ENCODE measurements at regions of chr15 and their contacts with region 1.

Region 1: DNA sequence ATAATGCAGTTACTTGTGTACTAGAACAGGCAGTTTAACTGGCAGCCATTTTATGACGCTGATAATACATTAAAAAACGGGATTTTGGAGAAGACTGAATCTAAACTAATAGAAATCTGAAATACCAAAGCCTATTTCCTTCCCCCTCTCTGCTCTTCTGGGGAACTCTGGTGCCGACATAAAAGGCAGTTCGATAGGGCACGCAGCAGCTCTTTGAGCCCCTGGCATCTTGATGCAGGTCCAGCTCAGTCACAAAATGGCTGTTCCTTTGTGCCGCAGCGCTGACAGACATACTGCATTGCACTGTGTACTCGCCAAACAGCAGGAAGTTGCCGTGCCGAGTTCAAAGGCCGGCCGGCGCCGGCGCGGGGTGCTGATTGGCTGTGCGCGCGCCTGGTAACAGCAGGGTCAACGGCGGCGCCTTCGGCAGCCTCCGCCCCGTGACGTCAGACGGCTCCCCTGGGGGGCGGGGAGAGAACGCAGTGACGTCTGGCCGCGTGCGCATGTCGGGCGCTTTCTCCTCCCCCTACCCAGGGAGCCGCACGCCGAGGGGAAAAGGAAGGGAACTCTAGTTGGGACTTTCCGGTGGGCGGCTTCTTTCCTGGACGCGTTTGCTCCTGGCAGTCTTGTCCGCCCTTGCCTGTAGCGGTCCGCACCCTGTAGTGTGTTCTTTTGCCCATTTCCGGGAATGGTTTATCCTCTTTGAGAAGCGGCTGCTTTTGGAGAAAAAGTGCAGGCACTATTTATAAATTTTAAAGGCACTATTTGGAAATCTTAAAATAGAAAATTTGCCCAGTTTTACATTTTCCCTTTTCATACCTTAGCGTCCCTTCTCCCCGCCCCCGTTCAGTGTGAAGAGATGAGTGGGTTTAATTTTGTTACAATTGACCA is 4.1 kb downstream of the CHD2 start:
- DNase-seq: peak; percentile 98
- H3K4me3 Mint-ChIP-seq: peak overlapping the region; percentile 91
- H3K27ac Mint-ChIP-seq: peak overlapping the region; percentile 99
- H3K4me1 Mint-ChIP-seq: peaks cover 35% of the 10 kb centered on the region
- H3K27me3 Mint-ChIP-seq: no peaks in the 10 kb centered on the region
- CTCF ChIP-seq: no peak

Region 2: DNA sequence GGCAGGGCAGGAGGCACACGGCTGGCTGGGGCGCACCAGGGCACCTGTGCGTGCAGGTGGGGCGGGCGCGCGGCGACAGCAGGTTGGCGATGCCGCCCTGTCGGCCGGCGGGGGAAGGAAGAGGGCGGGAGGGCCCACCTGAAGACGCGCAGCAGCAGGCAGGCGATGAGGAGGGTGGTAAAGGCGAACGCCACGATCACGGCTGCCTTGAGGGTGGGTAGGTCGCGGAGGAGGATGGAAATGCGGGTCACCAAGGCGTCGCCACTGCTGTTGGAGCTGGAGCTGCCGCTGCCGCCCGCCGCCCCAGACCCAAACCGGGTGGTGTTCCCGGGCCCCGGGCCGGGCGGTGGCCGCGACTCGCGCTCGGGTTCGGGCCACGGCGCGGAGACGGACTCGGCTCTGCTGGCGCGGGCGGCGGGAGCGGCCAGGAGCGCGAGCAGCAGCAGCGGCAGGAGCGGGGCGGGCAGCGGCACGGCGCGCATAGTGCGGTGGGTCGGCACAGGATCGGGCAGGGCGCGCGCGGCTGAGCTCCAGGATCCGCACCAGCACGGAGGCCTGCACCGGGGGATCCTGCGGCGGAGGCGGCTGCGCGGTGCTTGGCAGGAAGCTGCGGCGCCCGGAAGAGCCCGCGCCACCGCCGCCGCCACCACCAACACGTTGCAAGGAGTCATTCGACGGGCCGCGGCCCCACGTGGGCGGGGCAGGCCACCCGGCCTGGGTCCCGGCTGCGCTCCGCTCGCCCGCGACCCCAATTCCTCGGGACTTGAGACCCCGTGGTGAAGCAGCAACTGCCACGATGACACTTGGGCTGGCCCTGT is 248.8 kb before region 1 on chr15 and contains the start of gene FAM174B:
- CTCF ChIA-PET with region 1: no interaction called
- POLR2A ChIA-PET with region 1: no interaction called
- intact Hi-C with region 1: no loop called
- DNase-seq: no peak
- H3K4me3 Mint-ChIP-seq: peak within 1 kb of the TSS; percentile 60
- H3K27ac Mint-ChIP-seq: no peak within 1 kb of the TSS
- H3K4me1 Mint-ChIP-seq: peaks cover 4% of the 10 kb centered on the region
- H3K27me3 Mint-ChIP-seq: peaks cover 8% of the 10 kb centered on the region
- CTCF ChIP-seq: no peak
- total RNA-seq, gene FAM174B: 3.5 and 6.5 TPM in 2 replicates

Region 3: GRCh38 chr15:92733934-92734521 is 170.2 kb before region 1 on chr15:
- CTCF ChIA-PET with region 1: no interaction called
- POLR2A ChIA-PET with region 1: no interaction called
- intact Hi-C with region 1: no loop called
- DNase-seq: no peak
- H3K4me3 Mint-ChIP-seq: peak overlapping the region; percentile 68
- H3K27ac Mint-ChIP-seq: no peak overlapping the region
- H3K4me1 Mint-ChIP-seq: no peaks in the 10 kb centered on the region
- H3K27me3 Mint-ChIP-seq: no peaks in the 10 kb centered on the region
- CTCF ChIP-seq: no peak

Region 4: GRCh38 chr15:92797168-92797951 is 106.8 kb before region 1 on chr15:
- CTCF ChIA-PET with region 1: interaction called, 24 read pairs
- POLR2A ChIA-PET with region 1: interaction called, 847 read pairs
- intact Hi-C with region 1: no loop called
- DNase-seq: peak; percentile 76
- H3K4me3 Mint-ChIP-seq: no peak overlapping the region
- H3K27ac Mint-ChIP-seq: peak overlapping the region; percentile 84
- H3K4me1 Mint-ChIP-seq: peaks cover 18% of the 10 kb centered on the region
- H3K27me3 Mint-ChIP-seq: no peaks in the 10 kb centered on the region
- CTCF ChIP-seq: peak; percentile 53

Region 5: GRCh38 chr15:92803847-92804609 is 100.2 kb before region 1 on chr15:
- CTCF ChIA-PET with region 1: interaction called, 24 read pairs
- POLR2A ChIA-PET with region 1: interaction called, 847 read pairs
- intact Hi-C with region 1: loop called (anchors 1 kb)
- DNase-seq: peak; percentile 100
- H3K4me3 Mint-ChIP-seq: peak overlapping the region; percentile 1
- H3K27ac Mint-ChIP-seq: peak overlapping the region; percentile 98
- H3K4me1 Mint-ChIP-seq: peaks cover 34% of the 10 kb centered on the region
- H3K27me3 Mint-ChIP-seq: no peaks in the 10 kb centered on the region
- CTCF ChIP-seq: no peak

Region 6: DNA sequence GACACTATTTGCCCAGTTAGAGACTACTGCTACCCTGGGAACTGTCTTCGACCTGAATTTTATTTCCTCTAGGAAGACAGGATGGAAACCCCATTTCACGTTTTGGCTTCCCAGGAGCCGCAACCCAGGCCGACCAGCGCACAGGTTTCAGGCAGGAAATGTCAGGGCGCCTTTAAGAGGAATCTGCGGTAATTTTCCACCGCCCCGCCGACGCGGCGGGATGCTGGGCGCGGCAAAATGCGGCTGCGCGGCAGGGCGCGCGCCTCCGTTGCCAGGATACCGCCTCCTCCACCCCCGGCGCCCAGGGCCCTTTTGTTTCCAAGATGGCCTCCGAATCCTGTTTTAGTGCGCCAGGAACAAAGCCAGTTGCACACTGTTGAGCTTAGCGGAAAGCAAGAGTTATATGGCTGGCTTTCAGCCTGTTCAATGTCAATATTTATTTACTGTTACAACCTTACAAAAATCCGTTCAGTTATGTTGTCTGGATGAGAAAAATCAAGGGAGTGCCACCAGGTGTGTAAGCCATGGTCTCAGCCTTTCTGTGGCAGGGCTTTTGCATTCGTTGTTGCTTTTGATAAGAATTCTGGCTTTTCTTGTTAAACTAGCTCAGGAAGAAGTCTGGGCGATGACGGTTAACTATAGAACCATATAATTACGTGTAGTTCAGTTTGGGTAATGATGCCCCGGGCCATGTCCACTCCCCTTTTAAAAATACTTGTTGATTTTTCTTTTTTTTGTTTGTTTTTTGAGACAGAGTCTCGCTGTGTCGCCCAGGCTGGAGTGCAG is 83.8 kb before region 1 on chr15:
- CTCF ChIA-PET with region 1: interaction called, 4 read pairs
- POLR2A ChIA-PET with region 1: interaction called, 128 read pairs
- intact Hi-C with region 1: no loop called
- DNase-seq: peak; percentile 91
- H3K4me3 Mint-ChIP-seq: peak overlapping the region; percentile 72
- H3K27ac Mint-ChIP-seq: peak overlapping the region; percentile 98
- H3K4me1 Mint-ChIP-seq: peaks cover 25% of the 10 kb centered on the region
- H3K27me3 Mint-ChIP-seq: no peaks in the 10 kb centered on the region
- CTCF ChIP-seq: no peak

Region 7: GRCh38 chr15:92868992-92869988 is 34.9 kb before region 1 on chr15:
- CTCF ChIA-PET with region 1: no interaction called
- POLR2A ChIA-PET with region 1: interaction called, 38 read pairs
- intact Hi-C with region 1: no loop called
- DNase-seq: peak; percentile 81
- H3K4me3 Mint-ChIP-seq: peak overlapping the region; percentile 48
- H3K27ac Mint-ChIP-seq: peak overlapping the region; percentile 80
- H3K4me1 Mint-ChIP-seq: peaks cover 24% of the 10 kb centered on the region
- H3K27me3 Mint-ChIP-seq: no peaks in the 10 kb centered on the region
- CTCF ChIP-seq: no peak

Region 8: DNA sequence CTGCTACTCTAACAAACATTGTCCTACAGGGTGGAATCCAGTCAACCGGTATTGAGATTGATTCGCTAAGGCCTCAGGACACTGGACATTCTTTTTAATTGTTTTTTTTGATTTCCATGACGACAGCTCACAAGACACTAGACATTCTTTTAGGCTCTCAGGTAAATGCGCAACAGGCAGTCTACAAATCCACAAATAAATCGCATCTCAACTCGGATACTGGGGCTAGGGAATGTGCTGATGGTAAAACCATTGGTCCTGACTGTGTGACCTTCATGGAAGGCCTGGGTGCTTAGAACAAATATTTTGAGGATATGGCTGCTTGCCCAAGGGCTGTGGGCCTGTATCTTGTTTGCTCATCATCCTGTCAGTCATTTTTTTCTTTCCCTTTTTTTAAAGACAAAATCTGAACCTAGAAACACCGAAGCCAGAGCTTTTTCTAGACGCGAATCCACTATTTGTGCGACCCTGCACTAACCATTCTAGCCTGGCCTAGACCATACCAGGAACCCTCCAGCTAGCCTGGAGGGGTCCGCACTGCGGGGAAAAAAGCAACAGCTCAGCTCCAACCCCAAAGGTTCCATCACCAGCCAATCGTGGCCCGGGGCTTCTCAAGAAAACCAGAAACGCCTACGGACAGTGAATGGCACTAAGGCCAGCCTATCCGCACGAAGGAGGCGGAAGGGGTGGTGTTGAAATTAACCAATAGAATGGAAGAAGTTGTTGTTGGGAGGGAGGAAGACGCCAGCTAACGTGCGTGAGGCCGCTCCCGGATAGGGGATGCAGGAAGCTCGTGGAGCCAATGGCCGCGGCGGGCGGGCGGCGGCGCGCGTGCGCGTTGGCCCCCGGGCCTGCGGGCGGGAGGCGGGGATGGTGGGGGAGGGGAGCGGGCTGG is 22.1 kb before region 1 on chr15:
- CTCF ChIA-PET with region 1: interaction called, 13 read pairs
- POLR2A ChIA-PET with region 1: interaction called, 850 read pairs
- intact Hi-C with region 1: loop called (anchors 2 kb)
- DNase-seq: peak; percentile 99
- H3K4me3 Mint-ChIP-seq: peak overlapping the region; percentile 87
- H3K27ac Mint-ChIP-seq: peak overlapping the region; percentile 98
- H3K4me1 Mint-ChIP-seq: peaks cover 28% of the 10 kb centered on the region
- H3K27me3 Mint-ChIP-seq: no peaks in the 10 kb centered on the region
- CTCF ChIP-seq: no peak

Region 9: DNA sequence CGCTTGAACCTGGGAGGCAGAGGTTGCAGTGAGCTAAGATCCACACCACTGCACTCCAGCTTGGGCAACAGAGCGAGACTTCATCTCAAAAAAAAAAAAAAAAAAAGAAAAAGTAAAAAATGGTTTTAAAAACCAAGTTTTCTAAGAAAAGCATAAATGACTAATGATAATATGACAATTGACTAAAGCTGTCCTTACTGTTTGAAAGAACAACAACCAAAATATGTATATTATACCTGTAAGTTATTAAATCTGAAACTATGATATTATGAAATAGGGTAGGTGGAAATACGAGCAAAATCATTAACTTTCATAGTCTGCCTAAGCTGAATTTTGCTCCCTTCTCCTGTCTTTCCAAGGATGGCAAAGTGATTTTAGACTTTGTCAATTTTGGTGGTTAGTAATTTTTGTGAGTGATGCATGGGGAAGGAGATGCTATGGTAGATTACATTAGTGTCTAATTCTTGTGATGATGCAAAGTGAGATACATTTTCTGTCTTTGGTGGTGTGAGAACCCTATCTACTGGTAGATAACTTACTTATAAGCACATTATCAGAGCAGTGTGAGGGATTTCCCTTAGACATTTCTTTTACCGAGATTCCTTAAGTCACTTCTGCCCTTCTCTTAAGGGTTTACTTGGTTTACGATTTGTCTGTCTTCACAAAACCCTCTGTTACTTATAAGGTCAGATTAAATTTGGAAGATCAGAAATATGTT is 14.6 kb before region 1 on chr15:
- CTCF ChIA-PET with region 1: interaction called, 8 read pairs
- POLR2A ChIA-PET with region 1: interaction called, 850 read pairs
- intact Hi-C with region 1: loop called (anchors 2 kb)
- DNase-seq: no peak
- H3K4me3 Mint-ChIP-seq: peak overlapping the region; percentile 36
- H3K27ac Mint-ChIP-seq: no peak overlapping the region
- H3K4me1 Mint-ChIP-seq: peaks cover 13% of the 10 kb centered on the region
- H3K27me3 Mint-ChIP-seq: no peaks in the 10 kb centered on the region
- CTCF ChIP-seq: no peak

Measured in MCF 10A (cell line).